ENCODE measurements at regions of chr12 and their contacts with region 1.

Region 1: DNA sequence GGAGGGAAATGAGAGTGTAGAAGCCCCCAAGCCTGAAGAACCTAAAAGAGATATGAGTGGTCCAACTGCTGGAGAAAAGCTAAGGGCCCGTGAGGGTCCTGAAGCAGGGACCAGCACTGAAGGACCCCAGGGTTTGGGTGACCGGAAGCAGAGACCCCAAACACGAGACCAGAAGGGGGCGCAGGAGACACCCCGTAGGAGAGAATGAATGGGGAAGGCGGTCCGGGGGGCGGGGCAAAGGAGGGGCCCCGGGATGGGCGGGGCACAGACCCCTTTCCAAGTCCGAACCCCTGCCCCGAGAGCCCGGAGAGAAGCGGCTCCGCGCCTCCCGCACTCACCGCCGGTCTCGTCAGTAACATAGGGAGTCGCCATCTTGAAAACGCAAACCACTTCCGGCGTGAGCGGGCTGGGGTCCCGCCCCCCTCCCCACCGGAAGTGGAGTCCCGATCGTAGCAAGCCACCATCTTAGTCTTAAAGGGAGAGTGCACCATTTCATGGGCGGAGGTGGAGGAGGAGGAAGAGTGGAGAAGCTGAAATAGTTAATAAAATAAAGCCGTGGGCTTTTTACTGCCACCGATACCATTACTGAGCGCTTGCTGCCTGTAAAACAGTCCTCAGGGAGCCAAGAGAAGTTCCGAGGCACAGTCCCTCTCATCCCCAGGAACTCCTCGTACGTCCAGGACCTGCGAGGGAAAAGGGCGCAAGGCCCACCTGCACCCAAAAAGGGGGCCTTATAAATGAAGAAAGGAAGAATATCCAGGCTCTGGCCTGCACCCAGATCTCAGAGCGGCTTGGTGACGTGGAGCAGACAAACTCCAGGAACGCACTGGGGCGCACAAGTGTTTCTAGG is 731 bp downstream of the PYM1 start:
- DNase-seq: peak; percentile 91
- H3K4me3 ChIP-seq: peak overlapping the region; percentile 70 to 92 (median 77)
- H3K27ac ChIP-seq: peak overlapping the region; percentile 83
- H3K4me1 ChIP-seq: peaks cover 41% of the 10 kb centered on the region
- H3K27me3 ChIP-seq: no peaks in the 10 kb centered on the region
- CTCF ChIP-seq: peak; percentile 41 to 82

Region 2: GRCh38 chr12:55715833-55716581 is 211.0 kb before region 1 on chr12 and contains the start of gene BLOC1S1:
- CTCF ChIA-PET with region 1: no interaction called
- dilution Hi-C with region 1: loop called (anchors 10 kb)
- in situ Hi-C with region 1: no loop called
- intact Hi-C with region 1: no loop called
- DNase-seq: peak; percentile 83
- H3K4me3 ChIP-seq: peak within 1 kb of the TSS; percentile 64 to 82 (median 72)
- H3K27ac ChIP-seq: peak within 1 kb of the TSS; percentile 65
- H3K4me1 ChIP-seq: peaks cover 56% of the 10 kb centered on the region
- H3K27me3 ChIP-seq: no peaks in the 10 kb centered on the region
- CTCF ChIP-seq: no peak
- total RNA-seq, gene BLOC1S1: 29.7 to 71.0 TPM

Region 3: DNA sequence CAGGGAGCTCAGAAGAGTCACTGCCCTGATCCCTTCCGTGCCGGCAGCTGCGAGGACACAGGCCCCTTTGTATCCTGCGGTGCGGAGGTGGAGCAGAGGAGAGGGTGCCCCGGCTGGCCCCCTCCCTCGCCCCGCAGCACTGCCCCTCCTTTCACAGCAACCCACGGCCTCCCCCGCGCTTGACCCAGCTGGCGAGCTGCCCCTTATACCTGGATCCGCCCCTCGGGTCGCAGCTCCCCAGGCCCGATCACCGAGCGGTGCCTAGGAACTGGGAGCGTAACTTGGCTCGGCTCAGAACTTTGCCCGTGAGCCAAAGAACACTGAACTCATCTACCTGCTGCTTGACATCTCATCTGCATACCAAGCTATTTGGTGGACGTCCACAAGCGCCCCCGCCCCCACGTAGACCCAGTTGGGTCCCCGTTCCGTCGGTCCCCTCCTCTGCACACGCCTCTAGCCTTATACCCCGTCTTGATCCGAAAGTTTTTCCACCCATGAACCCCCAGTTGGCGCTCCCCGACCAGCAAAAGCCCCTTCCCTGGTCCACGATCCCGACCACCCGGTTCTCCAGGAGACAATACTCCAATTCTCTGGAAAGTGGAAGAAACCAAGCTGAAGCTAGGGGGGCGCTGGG is 96.9 kb before region 1 on chr12:
- CTCF ChIA-PET with region 1: no interaction called
- dilution Hi-C with region 1: no loop called
- in situ Hi-C with region 1: loop called in 1 of 2 experiments (anchors 10 kb)
- intact Hi-C with region 1: no loop called
- DNase-seq: no peak
- H3K4me3 ChIP-seq: peak overlapping the region; percentile 81 to 88 (median 83)
- H3K27ac ChIP-seq: peak overlapping the region; percentile 75
- H3K4me1 ChIP-seq: peaks cover 8% of the 10 kb centered on the region
- H3K27me3 ChIP-seq: no peaks in the 10 kb centered on the region
- CTCF ChIP-seq: no peak

Region 4: GRCh38 chr12:55955800-55956508 is 29.0 kb after region 1 on chr12:
- CTCF ChIA-PET with region 1: no interaction called
- dilution Hi-C with region 1: no loop called
- in situ Hi-C with region 1: no loop called
- intact Hi-C with region 1: loop called (anchors 2 kb)
- DNase-seq: peak; percentile 88
- H3K4me3 ChIP-seq: no peak overlapping the region
- H3K27ac ChIP-seq: no peak overlapping the region
- H3K4me1 ChIP-seq: peaks cover 24% of the 10 kb centered on the region
- H3K27me3 ChIP-seq: no peaks in the 10 kb centered on the region
- CTCF ChIP-seq: peak; percentile 84 to 88

Region 5: GRCh38 chr12:56041552-56042429 is 114.8 kb after region 1 on chr12 and contains the start of gene RPS26:
- CTCF ChIA-PET with region 1: no interaction called
- dilution Hi-C with region 1: no loop called
- in situ Hi-C with region 1: no loop called
- intact Hi-C with region 1: loop called (anchors 2 kb)
- DNase-seq: peak; percentile 99
- H3K4me3 ChIP-seq: peak within 1 kb of the TSS; percentile 78 to 91 (median 86)
- H3K27ac ChIP-seq: peak within 1 kb of the TSS; percentile 91
- H3K4me1 ChIP-seq: peaks cover 19% of the 10 kb centered on the region
- H3K27me3 ChIP-seq: no peaks in the 10 kb centered on the region
- CTCF ChIP-seq: peak; percentile 16 to 54
- total RNA-seq, gene RPS26: 46.4 to 331 TPM

Region 6: DNA sequence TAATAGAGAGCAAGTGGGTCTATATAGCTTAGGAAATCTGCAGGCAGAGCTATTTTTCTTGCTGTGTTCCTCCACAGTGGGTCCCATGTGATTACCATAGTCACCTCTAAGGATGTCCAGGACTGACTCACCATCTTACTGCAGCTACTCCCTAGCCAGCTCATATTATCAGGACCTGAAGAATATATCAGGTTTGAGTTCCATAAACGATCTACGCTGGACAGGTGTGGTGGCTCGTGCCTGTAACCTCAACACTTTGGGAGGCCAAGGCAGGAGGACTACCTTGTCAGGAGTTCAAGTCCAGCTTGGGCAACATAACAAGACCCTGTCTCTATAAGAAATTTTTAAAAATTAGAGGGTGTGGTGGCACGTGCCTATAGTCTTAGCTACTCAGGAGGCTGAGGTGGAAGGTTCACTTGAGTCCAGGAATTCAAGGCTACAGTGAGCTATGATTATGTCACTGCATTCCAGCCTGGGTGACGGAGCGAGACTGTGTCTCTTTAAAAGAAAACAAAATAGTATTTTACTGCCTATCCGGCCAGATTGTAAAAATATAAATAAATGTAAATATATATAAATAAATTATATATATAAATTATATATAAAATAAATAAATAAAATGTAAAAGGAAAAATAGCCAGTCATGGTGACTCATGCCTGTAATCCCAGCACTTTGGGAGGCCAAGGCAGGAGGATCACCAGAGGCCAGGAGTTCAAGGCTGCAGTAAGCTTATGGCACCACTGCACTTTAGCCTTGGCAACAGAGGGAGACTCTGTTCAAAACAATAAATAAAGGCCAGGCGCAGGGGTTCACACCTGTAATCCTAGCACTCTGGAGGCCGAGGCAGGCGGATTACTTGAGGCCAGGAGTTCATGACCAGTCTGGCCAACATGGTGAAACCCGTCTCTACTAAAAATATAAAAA is 534.5 kb after region 1 on chr12:
- CTCF ChIA-PET with region 1: no interaction called
- dilution Hi-C with region 1: no loop called
- in situ Hi-C with region 1: no loop called
- intact Hi-C with region 1: no loop called
- DNase-seq: peak; percentile 24
- H3K4me3 ChIP-seq: no peak overlapping the region
- H3K27ac ChIP-seq: no peak overlapping the region
- H3K4me1 ChIP-seq: no peaks in the 10 kb centered on the region
- H3K27me3 ChIP-seq: no peaks in the 10 kb centered on the region
- CTCF ChIP-seq: no peak